Activated CD4-positive, alpha-beta memory T cell treated with anti-CD3 and anti-CD28 coated beads for 36 hours (primary cell): ENCODE measurements at regions of chr17 and their contacts with region 1.

Region 1: DNA sequence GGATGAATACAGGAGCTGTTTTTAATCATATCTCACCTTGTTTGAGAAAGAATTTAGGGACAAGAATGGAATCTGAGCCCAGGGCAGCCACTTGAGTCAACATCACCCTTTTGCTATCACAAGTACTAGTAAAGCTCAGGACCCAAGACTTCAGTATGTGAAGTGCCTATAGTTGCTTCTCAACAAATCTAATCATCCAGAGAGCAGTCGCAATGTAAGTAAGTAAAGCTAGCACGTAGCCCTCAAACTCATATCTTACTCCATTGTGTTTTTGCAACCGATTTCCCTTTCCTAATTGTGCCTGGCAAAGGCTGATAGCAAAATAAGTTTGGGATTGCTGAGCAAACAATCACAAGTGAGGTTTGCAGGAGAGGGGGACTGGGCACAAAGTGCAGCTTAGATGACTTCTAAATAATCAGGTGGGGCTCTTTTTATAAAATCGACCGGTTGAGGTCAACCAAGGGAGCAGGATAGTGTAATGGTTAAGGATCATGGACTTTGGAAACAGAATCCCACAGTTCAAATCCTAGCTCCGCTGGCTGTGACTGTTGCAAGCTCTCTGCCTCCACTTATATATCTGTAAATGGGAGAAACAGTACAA is 13.0 kb downstream of the TOB1 start:
- DNase-seq: no peak
- H3K4me3 Mint-ChIP-seq: no peak overlapping the region
- H3K27ac Mint-ChIP-seq: no peak overlapping the region
- H3K4me1 Mint-ChIP-seq: peaks cover 14% of the 10 kb centered on the region
- H3K27me3 Mint-ChIP-seq: no peaks in the 10 kb centered on the region

Region 2: DNA sequence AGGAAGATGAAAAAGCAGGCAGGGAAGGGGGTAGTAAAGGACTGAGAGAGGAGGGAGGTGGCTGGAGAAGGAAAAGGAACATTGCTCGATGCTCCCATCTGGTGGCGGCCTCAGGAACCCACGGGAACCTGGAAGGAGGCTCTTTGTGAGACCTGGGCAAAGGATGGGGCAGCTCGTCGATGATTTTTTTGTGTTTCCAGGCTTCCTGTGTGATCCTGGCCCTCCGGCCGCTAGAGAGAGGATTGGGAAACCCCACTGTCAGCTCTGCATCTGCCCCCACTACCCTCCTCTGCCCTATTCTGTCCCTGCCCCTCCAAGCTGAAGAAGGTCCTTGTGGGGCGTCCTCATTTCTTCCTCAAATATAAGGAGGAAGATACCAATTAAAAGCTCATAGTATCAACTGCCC is 11.2 kb before region 1 on chr17:
- CTCF ChIA-PET with region 1: interaction called, 32 read pairs
- POLR2A ChIA-PET with region 1: interaction called, 4 read pairs
- intact Hi-C with region 1: no loop called
- DNase-seq: peak; percentile 77
- H3K4me3 Mint-ChIP-seq: no peak overlapping the region
- H3K27ac Mint-ChIP-seq: no peak overlapping the region
- H3K4me1 Mint-ChIP-seq: no peaks in the 10 kb centered on the region
- H3K27me3 Mint-ChIP-seq: no peaks in the 10 kb centered on the region

Region 3: GRCh38 chr17:50931144-50931908 is 78.2 kb after region 1 on chr17:
- CTCF ChIA-PET with region 1: interaction called, 13 read pairs
- POLR2A ChIA-PET with region 1: no interaction called
- intact Hi-C with region 1: no loop called
- DNase-seq: peak; percentile 66
- H3K4me3 Mint-ChIP-seq: peak overlapping the region; percentile 75
- H3K27ac Mint-ChIP-seq: peak overlapping the region; percentile 62
- H3K4me1 Mint-ChIP-seq: peaks cover 15% of the 10 kb centered on the region
- H3K27me3 Mint-ChIP-seq: no peaks in the 10 kb centered on the region

Region 4: GRCh38 chr17:50949989-50950881 is 97.1 kb after region 1 on chr17:
- CTCF ChIA-PET with region 1: interaction called, 147 read pairs
- POLR2A ChIA-PET with region 1: interaction called, 11 read pairs
- intact Hi-C with region 1: loop called (anchors 1 kb)
- DNase-seq: peak; percentile 72
- H3K4me3 Mint-ChIP-seq: no peak overlapping the region
- H3K27ac Mint-ChIP-seq: no peak overlapping the region
- H3K4me1 Mint-ChIP-seq: peaks cover 10% of the 10 kb centered on the region
- H3K27me3 Mint-ChIP-seq: no peaks in the 10 kb centered on the region

Region 5: DNA sequence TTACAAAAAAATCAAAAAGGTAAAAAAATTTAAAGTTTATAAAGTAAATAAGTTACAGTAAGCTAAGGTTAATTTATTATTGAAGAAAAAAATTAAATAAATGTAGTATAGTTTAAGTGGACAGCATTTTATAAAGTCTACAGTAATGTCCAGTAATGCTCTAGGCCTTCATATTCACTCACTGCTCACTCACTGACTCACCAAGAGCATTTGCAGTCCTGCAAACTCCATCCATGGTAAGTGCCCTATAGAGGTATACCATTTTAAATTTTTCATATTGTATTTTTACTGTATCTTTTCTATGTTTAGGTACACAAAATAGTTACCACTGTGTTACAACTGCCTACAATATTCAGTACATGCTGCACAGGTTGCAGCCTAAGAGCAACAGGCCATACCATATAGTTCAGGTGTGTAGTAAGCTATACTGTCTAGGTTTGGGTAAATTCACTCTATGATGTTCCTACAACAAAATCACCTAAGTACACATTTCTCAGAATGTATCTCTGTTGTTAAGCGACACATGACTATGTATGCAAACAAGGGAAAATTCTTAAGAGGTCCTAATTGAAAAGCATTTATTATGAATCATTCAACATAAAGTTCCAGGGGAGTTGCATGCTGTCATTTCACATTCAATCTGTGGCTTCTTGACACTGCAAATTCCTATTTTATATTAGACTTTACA is 175.2 kb after region 1 on chr17:
- CTCF ChIA-PET with region 1: no interaction called
- POLR2A ChIA-PET with region 1: no interaction called
- intact Hi-C with region 1: no loop called
- DNase-seq: no peak
- H3K4me3 Mint-ChIP-seq: no peak overlapping the region
- H3K27ac Mint-ChIP-seq: no peak overlapping the region
- H3K4me1 Mint-ChIP-seq: peaks cover 26% of the 10 kb centered on the region
- H3K27me3 Mint-ChIP-seq: no peaks in the 10 kb centered on the region

Region 6: DNA sequence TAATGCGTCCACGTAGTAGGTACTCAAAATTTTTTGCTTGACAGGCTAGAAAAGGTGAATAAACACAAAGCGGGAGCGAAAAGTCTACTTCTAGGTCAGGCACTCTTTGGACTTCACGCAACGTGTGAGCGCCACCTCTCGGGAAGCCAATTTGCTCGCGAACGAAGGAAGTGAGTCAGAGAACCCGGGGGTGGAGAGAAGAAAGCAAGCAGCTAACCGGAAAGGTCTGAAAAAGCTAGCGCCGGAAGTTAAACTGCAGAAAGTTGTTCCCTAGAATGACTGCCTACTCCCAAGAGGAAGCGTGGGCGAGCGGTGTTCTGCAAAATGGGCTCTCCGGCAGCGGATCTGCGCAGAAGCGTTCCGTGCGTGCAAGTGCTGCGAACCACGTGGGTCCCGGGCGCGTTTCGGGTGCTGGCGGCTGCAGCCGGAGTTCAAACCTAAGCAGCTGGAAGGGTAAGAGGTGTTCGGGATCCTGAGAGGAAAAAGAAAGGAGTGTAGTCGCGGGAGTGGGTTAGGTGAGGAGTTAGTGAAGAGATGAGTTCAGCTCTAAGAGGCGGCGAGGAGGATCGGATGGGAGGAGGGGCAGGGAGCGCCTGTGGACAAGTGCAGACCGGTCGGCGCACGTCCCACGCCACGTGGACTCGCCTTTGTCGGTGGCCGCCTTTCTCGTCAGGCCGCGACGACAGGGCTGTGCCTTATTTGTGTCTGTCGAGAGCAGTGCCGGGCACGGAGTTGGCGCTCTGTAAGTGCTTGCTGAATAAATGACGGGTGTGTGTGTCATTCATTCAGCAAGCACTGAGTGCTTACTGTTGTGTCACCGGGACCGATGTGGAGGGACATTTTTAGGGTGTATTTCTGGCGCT is 300.3 kb after region 1 on chr17 and contains the start of gene NME1:
- CTCF ChIA-PET with region 1: interaction called, 9 read pairs
- POLR2A ChIA-PET with region 1: no interaction called
- intact Hi-C with region 1: loop called (anchors 5 kb)
- DNase-seq: peak; percentile 99
- H3K4me3 Mint-ChIP-seq: no peak within 1 kb of the TSS
- H3K27ac Mint-ChIP-seq: no peak within 1 kb of the TSS
- H3K4me1 Mint-ChIP-seq: peaks cover 19% of the 10 kb centered on the region
- H3K27me3 Mint-ChIP-seq: no peaks in the 10 kb centered on the region
- total RNA-seq, gene NME1: 235 to 238 TPM